IMR-90 (cell line): ENCODE measurements at regions of chr15 and their contacts with region 1.

Region 1: DNA sequence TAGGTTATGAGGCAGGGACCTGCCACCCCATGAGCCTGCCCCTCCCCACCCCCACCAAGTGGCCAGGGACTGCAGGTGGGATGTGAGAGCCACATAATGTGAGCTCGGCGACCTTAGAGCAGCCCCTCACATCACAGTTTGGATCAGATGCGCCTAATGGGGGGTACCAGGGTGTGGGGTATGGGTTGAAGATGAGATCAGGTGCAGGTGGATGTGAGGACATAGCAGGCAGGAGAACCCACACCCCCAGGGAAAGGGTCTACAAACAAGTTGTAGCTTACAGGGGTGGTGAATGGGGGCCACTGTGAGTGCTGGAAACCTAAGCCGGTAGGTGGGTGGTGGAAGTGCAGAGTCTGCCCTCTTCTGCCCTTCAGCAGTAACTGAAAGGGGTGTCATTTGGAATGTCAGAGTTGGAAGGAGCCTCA is 94.0 kb downstream of the CORO2B start:
- DNase-seq: peak; percentile 19
- ATAC-seq: no peak
- H3K4me3 ChIP-seq: no peak overlapping the region
- H3K27ac ChIP-seq: no peak overlapping the region
- H3K4me1 ChIP-seq: no peaks in the 10 kb centered on the region
- H3K27me3 ChIP-seq: no peaks in the 10 kb centered on the region
- CTCF ChIP-seq: peak; percentile 38
- POLR2A ChIP-seq: no peak
- RAD21 ChIP-seq: peak; percentile 55

Region 2: DNA sequence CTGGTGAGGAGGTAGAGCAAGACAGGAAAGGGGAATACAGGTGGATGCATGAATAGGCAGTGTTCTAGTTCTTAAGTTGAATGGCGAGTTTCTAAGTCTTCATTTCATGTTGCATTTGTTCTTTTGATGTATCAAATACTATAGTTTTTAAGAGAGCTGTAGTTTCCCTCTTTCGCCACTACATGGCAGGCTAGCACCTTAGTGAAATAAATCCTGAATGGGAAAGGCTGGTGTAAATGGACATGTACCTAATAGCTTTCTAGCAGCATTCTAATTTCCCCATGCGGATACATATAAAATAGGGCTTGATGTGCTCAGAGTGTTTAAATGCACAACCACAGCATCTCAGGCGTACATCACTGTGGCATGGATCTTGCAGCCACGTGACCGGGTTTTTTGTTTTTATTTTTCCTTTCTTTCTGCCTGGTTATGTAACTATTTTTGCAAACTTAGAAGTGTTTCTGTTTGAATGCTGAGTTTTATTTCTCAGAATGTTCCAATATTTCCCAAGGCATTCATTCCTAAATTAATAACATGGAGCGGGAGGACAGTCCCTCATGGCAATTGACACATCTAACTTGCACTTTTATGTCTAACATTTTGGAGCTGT is 419.8 kb before region 1 on chr15:
- CTCF ChIA-PET with region 1: interaction called, 4 read pairs
- POLR2A ChIA-PET with region 1: no interaction called
- dilution Hi-C with region 1: no loop called
- in situ Hi-C with region 1: no loop called
- intact Hi-C with region 1: loop called (anchors 1 kb)
- DNase-seq: peak; percentile 85
- ATAC-seq: peak; percentile 79
- H3K4me3 ChIP-seq: no peak overlapping the region
- H3K27ac ChIP-seq: no peak overlapping the region
- H3K4me1 ChIP-seq: no peaks in the 10 kb centered on the region; the same call in 1 of the 2 replicates
- H3K27me3 ChIP-seq: peaks cover 2% of the 10 kb centered on the region; the same call in 1 of the 2 replicates
- CTCF ChIP-seq: peak; percentile 91
- POLR2A ChIP-seq: no peak
- RAD21 ChIP-seq: peak; percentile 91

Region 3: DNA sequence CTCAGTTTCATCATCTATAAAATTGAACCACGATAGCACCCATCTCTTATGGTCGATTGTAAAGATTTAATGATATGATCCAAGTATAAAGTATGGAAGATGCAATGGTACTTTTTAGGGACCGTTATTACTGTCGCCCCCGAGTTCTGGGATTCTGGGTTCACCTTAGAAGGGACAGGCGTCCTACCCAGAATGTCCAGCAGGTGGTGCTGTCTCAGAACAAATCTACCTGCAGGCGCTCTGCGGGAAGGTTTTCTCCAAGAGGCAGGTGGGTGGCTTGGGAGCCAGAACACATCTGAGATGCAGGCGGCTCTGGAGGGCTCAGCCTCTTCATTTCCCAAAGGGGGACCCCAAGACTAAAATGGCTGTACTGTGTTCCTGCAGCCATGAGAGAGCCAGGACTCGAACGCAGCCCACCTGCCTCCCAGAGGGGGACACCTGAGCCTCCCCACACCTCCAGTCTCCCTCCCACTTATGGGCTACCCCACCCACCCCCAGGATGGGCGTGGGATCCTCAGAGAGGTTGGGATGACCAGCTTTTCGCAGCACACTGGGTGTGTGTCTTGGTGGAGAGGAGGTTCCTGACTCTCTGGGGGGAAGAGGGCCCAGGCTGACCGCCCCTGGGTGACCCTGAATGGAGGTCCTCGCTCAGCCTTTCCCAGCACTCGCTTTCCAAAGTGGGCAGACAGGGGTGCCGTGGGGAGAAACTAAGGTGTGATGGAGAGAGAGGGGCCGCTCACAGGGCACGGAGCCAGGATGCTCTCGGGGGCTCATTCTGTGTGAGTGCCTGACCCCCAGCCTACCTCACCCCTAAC is 122.1 kb before region 1 on chr15:
- CTCF ChIA-PET with region 1: interaction called, 10 read pairs
- POLR2A ChIA-PET with region 1: no interaction called
- dilution Hi-C with region 1: no loop called
- in situ Hi-C with region 1: no loop called
- intact Hi-C with region 1: no loop called
- DNase-seq: peak; percentile 44
- ATAC-seq: peak; percentile 67
- H3K4me3 ChIP-seq: no peak overlapping the region
- H3K27ac ChIP-seq: no peak overlapping the region
- H3K4me1 ChIP-seq: peaks cover 5% of the 10 kb centered on the region
- H3K27me3 ChIP-seq: peaks cover 2% of the 10 kb centered on the region
- CTCF ChIP-seq: peak; percentile 72
- POLR2A ChIP-seq: no peak
- RAD21 ChIP-seq: peak; percentile 71

Region 4: DNA sequence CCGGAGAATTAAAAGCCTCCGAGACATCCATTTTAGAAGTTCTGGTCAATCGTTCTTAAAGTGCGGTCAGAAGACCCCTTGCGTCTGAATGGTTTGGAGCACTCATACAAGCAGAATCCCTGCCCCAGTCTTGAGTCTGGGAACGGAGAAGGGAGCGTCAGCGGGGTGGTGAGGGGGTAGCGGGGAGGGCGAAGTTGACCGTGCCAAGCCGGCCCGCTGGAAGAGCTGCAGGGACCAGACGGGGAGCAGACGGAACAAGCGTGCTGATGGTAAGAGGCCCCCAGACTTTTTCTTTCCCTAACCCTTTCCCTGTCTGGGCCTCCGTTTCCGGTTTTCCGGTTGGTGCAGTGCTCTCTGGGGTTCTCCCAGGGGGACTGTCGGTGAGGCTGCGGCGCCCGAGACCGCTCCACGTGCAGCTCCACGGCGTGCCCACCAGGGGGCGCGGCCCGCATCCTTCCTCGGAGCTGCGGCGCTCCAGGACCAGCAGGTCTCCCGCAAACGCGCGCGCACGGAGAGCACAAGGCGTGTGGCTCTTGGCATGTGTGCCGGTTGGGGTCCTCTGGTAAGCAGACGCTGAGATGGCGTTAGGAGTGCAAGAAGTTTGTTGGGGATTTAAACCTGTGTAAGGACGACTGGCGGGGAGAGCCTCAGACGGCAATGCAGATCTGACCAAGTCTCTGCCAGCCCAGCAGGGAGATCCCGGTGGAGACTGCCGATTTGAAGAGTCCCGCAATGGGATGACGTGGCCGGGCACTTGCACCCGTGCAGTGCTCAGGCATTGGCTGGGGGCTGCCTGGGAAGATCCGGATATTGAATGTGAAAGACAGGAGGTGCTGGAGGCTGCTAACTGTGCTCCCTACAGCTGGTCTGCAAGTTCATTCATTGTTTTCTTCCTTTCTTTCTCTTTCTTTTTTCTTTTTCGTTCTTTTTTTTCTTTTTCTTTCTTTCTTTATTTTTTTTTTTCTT is 113.2 kb before region 1 on chr15:
- CTCF ChIA-PET with region 1: interaction called, 20 read pairs
- POLR2A ChIA-PET with region 1: no interaction called
- dilution Hi-C with region 1: no loop called
- in situ Hi-C with region 1: no loop called
- intact Hi-C with region 1: loop called (anchors 1 kb)
- DNase-seq: peak; percentile 70
- ATAC-seq: peak; percentile 99
- H3K4me3 ChIP-seq: peak overlapping the region; percentile 51
- H3K27ac ChIP-seq: no peak overlapping the region
- H3K4me1 ChIP-seq: no peaks in the 10 kb centered on the region
- H3K27me3 ChIP-seq: peaks cover 4% of the 10 kb centered on the region; the same call in 1 of the 2 replicates
- CTCF ChIP-seq: peak; percentile 90
- POLR2A ChIP-seq: no peak
- RAD21 ChIP-seq: peak; percentile 87

Region 5: DNA sequence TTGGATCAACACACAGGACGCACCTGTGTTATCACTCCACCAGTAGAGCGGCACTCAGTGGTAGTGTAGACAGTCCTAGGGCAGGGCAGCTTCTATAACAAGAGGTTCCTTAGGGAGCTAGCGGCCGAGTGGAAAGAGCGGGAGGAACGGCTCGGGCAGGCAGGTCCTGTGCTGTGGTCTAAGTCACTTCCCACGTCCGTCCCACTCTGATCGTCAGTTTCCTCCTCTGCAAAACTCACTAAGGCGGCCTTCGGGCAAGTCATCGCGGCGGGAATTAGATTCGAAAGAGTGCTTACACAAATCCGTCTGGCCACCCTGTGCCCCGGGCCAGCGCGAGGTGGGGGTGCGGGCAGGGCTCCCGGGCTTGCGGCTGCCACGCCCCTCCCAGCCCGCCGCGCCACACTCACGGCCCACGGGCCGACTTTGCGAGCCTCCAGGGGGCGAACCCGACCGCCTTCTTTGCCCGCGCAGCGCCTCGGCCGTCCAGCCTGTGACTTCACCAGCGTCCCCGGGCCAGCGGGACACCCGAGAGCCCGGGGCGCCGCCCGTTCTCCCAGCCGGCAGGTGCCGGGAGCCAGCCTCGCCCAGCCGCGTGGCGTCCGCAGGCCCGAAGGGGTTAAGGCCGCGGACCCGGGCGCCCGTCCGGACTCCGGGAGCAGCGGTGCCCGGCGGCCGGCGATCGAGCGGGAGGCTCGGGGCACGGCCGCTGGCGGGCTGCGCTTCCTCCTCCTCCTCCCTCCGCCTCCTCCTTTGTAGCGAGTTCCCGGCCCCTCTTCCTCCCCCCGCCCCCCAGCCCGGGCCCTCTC is 94.4 kb before region 1 on chr15:
- CTCF ChIA-PET with region 1: interaction called, 5 read pairs
- POLR2A ChIA-PET with region 1: no interaction called
- dilution Hi-C with region 1: no loop called
- in situ Hi-C with region 1: loop called (anchors 5 kb)
- intact Hi-C with region 1: loop called (anchors 1 kb)
- DNase-seq: peak; percentile 71
- ATAC-seq: peak; percentile 86
- H3K4me3 ChIP-seq: peak overlapping the region; percentile 58
- H3K27ac ChIP-seq: peak overlapping the region; percentile 8; the same call in 1 of the 2 replicates
- H3K4me1 ChIP-seq: peaks cover 7% of the 10 kb centered on the region
- H3K27me3 ChIP-seq: peaks cover 2% of the 10 kb centered on the region
- CTCF ChIP-seq: peak; percentile 68
- POLR2A ChIP-seq: peak; percentile 26; the same call in 1 of the 2 replicates
- RAD21 ChIP-seq: peak; percentile 81

Region 6: GRCh38 chr15:68875377-68876116 is 202.8 kb after region 1 on chr15:
- CTCF ChIA-PET with region 1: interaction called, 5 read pairs
- POLR2A ChIA-PET with region 1: no interaction called
- dilution Hi-C with region 1: no loop called
- in situ Hi-C with region 1: no loop called
- intact Hi-C with region 1: loop called (anchors 5 kb)
- DNase-seq: peak; percentile 88
- ATAC-seq: peak; percentile 92
- H3K4me3 ChIP-seq: peak overlapping the region; percentile 28
- H3K27ac ChIP-seq: no peak overlapping the region
- H3K4me1 ChIP-seq: no peaks in the 10 kb centered on the region
- H3K27me3 ChIP-seq: peaks cover 24% of the 10 kb centered on the region
- CTCF ChIP-seq: peak; percentile 92
- POLR2A ChIP-seq: no peak
- RAD21 ChIP-seq: peak; percentile 96